Motor neuron (in vitro differentiated cells): ENCODE measurements at regions of chr5 and their contacts with region 1.

Region 1: GRCh38 chr5:121870489-121870888 is 18.8 kb downstream of the FTMT start:
- ATAC-seq: no peak
- H3K4me3 ChIP-seq: no peak overlapping the region
- H3K27ac ChIP-seq: no peak overlapping the region
- H3K4me1 ChIP-seq: no peaks in the 10 kb centered on the region

Region 2: DNA sequence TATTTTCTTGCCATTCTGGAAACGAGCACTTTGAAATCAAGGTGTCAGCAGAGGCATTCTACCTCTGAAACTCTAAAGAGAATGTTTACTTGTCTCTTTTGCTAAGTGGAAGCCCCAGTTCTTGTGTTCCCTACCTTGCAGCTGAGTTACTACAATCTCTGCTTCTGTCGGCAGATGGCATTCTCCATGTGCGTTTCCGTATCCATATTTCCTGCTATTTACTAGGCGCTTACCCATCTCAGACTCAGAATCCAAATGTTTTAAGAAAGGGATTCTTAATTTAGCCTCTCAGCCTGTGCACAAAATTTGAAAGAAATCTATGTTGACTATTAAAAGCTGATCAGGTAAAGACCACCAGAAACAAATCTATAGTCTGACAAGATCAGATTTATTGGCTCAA is 240.1 kb before region 1 on chr5:
- in situ Hi-C with region 1: loop called in 2 of 9 experiments (anchors 25 kb)
- ATAC-seq: peak in 3 of 8 experiments; percentile 22 to 75 (median 50)
- H3K4me3 ChIP-seq: no peak overlapping the region
- H3K27ac ChIP-seq: no peak overlapping the region
- H3K4me1 ChIP-seq: no peaks in the 10 kb centered on the region